Activated CD8-positive, alpha-beta memory T cell treated with anti-CD3 and anti-CD28 coated beads, Interleukin-2, amount 10 ng/mL, durations not matched to agents 7 days and 5 days (primary cell): ENCODE measurements at regions of chr6 and their contacts with region 1.

Region 1: GRCh38 chr6:137707590-137708360 is 159.3 kb upstream of the TNFAIP3 start:
- DNase-seq: peak; percentile 94
- ATAC-seq: peak; percentile 82
- H3K4me3 Mint-ChIP-seq: peak overlapping the region; percentile 59
- H3K27ac Mint-ChIP-seq: peak overlapping the region; percentile 90
- H3K4me1 Mint-ChIP-seq: peaks cover 71% of the 10 kb centered on the region
- H3K27me3 Mint-ChIP-seq: no peaks in the 10 kb centered on the region

Region 2: GRCh38 chr6:137697267-137697938 is 10.4 kb before region 1 on chr6:
- CTCF ChIA-PET with region 1: interaction called, 14 read pairs
- DNase-seq: no peak
- ATAC-seq: peak; percentile 32
- H3K4me3 Mint-ChIP-seq: no peak overlapping the region
- H3K27ac Mint-ChIP-seq: peak overlapping the region; percentile 47
- H3K4me1 Mint-ChIP-seq: peaks cover 57% of the 10 kb centered on the region
- H3K27me3 Mint-ChIP-seq: no peaks in the 10 kb centered on the region

Region 3: GRCh38 chr6:137823826-137824555 is 116.2 kb after region 1 on chr6:
- CTCF ChIA-PET with region 1: interaction called, 13 read pairs
- DNase-seq: peak; percentile 83
- ATAC-seq: peak; percentile 79
- H3K4me3 Mint-ChIP-seq: peak overlapping the region; percentile 65
- H3K27ac Mint-ChIP-seq: peak overlapping the region; percentile 98
- H3K4me1 Mint-ChIP-seq: peaks cover 77% of the 10 kb centered on the region
- H3K27me3 Mint-ChIP-seq: no peaks in the 10 kb centered on the region

Region 4: DNA sequence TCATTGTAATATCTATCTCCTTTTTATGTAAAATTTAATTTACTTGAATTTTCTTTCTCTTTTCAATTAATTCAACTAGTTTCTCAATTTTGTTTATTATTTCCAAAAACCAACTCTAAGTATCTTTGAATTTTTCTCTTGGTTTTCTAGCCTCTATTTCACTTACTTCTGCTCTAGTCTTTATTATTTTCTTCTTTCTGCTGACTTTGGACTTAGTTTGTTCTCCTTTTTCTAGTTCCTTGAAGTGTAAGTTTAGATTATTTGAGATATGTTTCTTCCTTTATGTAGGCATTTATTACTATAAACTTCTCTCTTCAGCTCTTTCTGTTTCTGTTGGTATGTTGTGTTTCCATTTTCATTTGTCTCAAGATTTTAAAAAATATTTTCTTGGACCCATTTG is 230.1 kb after region 1 on chr6:
- CTCF ChIA-PET with region 1: interaction called, 38 read pairs
- DNase-seq: no peak
- ATAC-seq: no peak
- H3K4me3 Mint-ChIP-seq: no peak overlapping the region
- H3K27ac Mint-ChIP-seq: no peak overlapping the region
- H3K4me1 Mint-ChIP-seq: peaks cover 30% of the 10 kb centered on the region
- H3K27me3 Mint-ChIP-seq: no peaks in the 10 kb centered on the region

Region 5: DNA sequence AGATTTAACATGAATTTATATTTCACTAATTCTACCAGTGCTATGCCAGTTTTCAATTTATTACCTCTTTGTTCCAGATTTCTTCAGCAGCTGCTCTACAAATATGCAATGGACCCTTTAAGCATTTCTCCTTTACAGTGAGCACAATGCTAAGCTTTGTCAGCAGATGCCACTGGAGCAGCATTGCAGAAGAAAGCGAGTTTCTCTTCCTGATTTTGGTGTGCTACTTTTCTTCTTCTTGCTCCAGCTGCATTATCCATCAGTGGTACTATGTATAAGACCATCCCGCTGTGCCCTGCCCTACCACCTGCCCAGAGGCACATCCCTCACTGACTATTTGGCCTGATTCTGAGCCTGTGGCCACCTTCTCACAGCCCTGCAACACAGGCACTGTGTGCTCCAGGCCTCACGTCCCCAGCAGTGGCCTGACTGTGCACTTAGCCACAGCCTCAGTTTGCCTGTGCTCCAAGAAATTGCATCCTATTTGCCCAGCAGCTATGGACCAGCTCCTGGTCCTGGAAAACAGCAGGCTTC is 243.4 kb after region 1 on chr6:
- CTCF ChIA-PET with region 1: interaction called, 13 read pairs
- DNase-seq: no peak
- ATAC-seq: no peak
- H3K4me3 Mint-ChIP-seq: no peak overlapping the region
- H3K27ac Mint-ChIP-seq: no peak overlapping the region
- H3K4me1 Mint-ChIP-seq: peaks cover 19% of the 10 kb centered on the region
- H3K27me3 Mint-ChIP-seq: no peaks in the 10 kb centered on the region